ENCODE measurements at regions of chr7 and their contacts with region 1.

Region 1: GRCh38 chr7:100889761-100890634 is 483 bp upstream of the UFSP1 start:
- DNase-seq: peak; percentile 90
- H3K4me3 ChIP-seq: peak overlapping the region; percentile 50 to 79 (median 51)
- H3K27ac ChIP-seq: peak overlapping the region; percentile 29
- H3K4me1 ChIP-seq: peaks cover 36% of the 10 kb centered on the region
- H3K27me3 ChIP-seq: no peaks in the 10 kb centered on the region
- CTCF ChIP-seq: no peak

Region 2: DNA sequence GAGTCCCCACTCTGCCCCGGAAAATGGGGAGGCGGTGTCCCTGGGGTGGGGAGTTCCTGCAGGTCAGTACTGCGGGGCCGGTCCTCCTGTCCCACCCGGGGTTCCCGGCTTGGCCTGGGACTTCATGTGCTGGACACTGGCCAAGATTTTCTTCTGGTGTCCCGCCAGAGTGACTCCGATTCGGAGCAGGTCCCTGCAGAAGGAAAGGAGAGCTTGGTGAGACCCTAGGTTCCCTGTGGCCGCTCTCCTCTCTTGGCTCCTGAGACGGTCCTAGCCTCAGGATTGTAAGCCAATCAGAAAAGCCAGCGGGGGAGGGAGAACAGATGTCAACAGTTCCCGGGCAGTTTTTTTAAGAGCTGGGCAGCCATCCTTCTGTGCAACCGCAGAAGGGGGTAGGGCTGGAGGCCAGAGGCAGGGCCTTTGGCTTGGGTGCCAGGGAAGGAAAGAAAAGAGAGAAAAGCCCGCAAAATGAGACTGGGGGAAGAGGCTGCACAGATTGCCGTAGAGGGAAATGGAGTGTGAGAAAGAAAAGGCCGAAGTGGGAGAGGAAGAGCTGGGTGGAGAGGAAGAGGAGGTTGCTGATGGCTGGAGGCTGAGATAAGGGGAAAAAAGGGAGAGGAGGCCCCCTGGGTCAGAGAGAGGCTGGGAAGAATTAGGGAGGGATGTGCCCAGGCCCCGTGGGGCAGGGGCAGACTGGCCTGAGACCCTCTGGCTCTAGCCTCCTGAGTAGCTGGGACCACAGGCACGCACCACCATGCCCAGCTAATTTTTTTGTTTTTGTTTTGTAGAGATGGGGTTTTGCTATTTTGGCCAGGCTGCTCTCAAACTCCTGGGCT is 86.4 kb before region 1 on chr7:
- CTCF ChIA-PET with region 1: no interaction called
- dilution Hi-C with region 1: no loop called
- in situ Hi-C with region 1: no loop called
- intact Hi-C with region 1: loop called (anchors 1 kb)
- DNase-seq: peak; percentile 82
- H3K4me3 ChIP-seq: peak overlapping the region in 1 of 3 experiments; percentile 3
- H3K27ac ChIP-seq: peak overlapping the region; percentile 9
- H3K4me1 ChIP-seq: peaks cover 45% of the 10 kb centered on the region
- H3K27me3 ChIP-seq: no peaks in the 10 kb centered on the region
- CTCF ChIP-seq: no peak

Region 3: GRCh38 chr7:100957832-100958421 is 67.9 kb after region 1 on chr7:
- CTCF ChIA-PET with region 1: no interaction called
- dilution Hi-C with region 1: loop called (anchors 5 kb)
- in situ Hi-C with region 1: no loop called
- intact Hi-C with region 1: no loop called
- DNase-seq: peak; percentile 23
- H3K4me3 ChIP-seq: no peak overlapping the region
- H3K27ac ChIP-seq: no peak overlapping the region
- H3K4me1 ChIP-seq: no peaks in the 10 kb centered on the region
- H3K27me3 ChIP-seq: no peaks in the 10 kb centered on the region
- CTCF ChIP-seq: no peak

Region 4: DNA sequence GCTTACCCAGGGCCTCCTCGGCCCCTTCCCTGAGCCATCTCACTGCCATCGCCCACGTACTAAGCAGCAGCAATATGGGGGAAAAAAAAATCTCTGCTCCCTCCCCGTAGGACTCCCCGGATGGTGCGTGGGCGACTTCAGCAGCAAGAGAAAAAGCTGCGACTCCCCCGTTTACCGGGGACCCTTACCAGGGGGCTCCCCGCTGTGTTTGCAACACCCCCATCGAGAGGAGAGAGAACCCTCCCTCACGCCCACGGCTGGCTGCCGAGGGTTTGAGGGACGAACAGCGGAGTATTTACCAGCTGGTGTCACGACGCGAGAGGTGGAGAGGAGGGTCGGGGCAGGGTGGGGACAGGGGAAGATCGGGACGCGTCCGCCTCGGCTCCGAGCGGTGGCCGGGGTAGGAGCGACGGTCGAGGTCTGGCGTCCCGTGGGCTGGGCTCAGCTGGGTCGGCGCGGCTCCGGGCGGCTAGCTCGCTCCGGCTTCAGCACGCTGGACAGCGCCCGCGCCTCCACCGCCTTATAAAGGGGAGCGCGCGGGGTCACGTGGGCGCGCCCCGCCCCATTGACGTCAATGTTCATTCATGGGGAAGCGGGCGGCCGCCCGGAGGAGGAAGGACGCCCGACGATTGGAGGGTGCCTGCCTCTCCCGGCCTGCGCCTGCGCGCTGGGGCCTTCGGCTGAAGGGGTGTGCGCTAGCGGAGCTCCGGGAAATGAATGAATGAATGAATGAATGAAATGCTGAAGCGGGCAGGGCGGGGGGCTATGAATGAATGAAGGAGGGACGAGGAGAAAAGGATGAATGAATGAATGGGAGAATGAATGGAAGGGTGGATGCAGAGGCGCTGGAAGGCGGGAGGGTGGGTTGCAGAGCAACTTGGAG is 275.3 kb after region 1 on chr7 and contains the start of gene VGF:
- CTCF ChIA-PET with region 1: no interaction called
- dilution Hi-C with region 1: loop called (anchors 10 kb)
- in situ Hi-C with region 1: no loop called
- intact Hi-C with region 1: no loop called
- DNase-seq: peak; percentile 91
- H3K4me3 ChIP-seq: peak within 1 kb of the TSS; percentile 18 to 49 (median 47)
- H3K27ac ChIP-seq: no peak within 1 kb of the TSS
- H3K4me1 ChIP-seq: peaks cover 48% of the 10 kb centered on the region
- H3K27me3 ChIP-seq: peaks cover 7% of the 10 kb centered on the region
- CTCF ChIP-seq: no peak
- total RNA-seq, gene VGF: 0.54 TPM in 1 of 2 donors, not detected in the other